ENCODE measurements at regions of chr2 and their contacts with region 1.

Region 1: DNA sequence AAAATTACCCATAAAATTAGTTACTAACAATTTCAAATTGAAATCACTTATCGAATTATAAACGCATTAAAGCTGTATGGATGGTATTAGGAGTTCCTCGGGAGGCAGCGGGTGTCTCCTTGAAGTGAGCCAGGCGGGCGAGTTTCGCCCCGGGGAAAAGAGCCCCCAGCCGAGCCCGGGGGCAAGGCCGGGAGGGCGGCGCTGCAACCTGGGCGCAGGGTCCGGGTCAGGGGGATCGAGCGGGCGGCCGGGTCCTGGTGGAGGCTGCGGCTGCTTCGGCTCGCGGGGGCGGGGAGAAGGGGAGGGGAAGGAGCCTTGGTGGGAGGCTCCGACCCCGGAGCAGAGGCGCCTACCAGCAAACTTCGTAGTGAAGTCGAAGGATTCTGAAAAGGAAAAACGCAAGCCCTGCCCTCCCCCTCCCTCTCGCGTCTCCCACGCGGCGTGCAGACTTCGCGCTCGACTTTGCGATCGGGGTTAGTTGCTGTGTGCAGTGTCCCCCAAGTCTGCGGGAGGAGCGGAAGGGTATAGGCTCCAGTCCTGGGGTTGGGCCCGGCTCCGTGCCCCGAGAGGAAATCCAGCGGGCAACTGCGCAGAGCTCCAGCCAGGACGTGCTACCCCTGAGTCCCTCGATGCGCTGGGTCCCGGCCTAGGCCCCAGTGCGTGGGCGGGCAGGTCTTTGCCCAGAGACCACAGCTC is 140.8 kb downstream of the MEIS1 start:
- DNase-seq: peak; percentile 65
- ATAC-seq: peak; percentile 54

Region 2: DNA sequence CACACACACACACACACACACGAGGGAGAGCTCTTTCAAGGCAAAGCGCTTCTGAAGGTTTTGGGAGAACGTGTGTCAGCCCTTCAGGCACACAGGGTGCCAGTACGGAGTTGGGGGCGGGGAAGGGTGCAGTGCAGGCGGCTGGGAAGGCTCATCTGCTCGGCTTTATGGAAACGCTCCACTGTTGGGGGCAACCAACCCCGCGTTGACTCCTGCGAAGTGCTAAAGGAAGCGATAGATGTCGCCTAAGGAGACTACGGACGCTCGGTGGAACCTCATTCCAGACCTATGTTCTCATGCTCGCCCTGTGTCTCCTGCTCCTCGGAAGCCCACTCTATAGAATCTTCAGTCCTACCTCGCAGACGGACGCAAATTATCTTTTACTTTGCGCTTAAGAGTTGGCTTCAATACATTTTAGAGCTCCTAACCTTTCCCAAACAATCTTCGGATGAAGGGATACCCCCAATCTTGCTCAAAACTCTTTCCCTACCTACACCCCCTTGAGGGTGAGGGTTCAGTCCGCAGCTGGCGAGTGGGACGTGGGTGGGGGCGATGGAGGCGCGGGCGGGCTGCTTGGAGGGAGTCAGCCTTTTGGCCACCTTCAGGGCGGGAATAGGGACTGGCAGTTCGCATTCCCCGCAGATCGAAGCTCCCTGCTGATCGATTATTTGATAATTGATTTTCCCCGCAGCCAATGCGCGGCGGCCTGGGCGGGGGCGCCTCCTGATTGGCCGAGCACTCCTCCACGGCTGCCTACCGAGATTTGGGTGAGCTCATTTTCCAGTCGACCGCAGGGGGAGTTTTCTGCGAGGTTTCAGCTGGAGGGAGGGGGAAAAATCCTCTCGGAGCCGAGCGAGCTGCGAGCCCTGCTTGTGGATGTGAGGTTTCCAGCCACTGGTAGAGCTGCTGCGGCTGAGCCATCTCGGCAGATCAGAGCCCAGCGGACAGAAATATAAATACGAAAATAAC is 142.7 kb before region 1 on chr2:
- intact Hi-C with region 1: loop called (anchors 2 kb)
- DNase-seq: peak; percentile 92
- ATAC-seq: peak; percentile 93